ENCODE measurements at regions of chr19 and their contacts with region 1.

Region 1: DNA sequence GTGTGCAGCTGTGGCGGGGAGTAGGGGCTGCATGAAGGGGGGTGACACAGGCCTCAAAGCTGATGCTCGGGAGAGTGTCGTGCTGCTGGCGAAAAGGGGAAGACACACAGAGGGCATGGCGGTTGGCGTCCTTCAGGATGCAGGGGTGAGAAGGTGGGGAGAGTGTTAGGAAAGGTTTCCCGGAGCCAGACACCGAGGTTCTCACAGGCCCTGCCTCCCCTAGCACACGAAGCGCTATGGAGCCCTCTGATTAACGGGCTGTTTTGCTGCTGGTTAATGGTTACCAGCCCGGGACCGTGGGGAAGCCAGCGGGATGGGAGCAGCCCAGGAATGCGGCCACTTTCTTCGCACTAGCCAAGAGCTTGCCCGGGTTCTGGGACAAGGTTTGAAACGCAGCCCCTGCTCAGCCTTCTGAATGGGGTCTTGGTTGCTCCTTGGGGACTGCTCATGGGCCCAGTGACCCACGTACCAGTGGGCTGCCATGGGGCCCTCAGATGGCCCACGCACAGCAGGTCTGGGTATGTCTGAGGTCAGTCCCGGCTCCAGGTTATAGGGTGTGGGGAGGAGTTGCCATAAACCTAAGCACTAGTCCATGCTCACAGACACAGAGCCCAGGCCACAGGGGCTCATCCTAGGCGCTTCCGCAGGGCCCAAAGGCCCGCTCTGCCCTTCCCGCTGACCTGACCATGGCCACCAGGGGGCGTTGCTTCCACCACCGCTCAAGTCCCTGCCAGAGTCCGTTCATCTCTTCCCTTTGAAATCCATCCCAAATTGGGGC is 31.3 kb upstream of the ISYNA1 start:
- DNase-seq: peak; percentile 65
- ATAC-seq: peak; percentile 44 to 50

Region 2: GRCh38 chr19:18373892-18374629 is 95.2 kb before region 1 on chr19:
- intact Hi-C with region 1: no loop called
- DNase-seq: peak; percentile 94
- ATAC-seq: peak; percentile 97 to 98

Region 3: DNA sequence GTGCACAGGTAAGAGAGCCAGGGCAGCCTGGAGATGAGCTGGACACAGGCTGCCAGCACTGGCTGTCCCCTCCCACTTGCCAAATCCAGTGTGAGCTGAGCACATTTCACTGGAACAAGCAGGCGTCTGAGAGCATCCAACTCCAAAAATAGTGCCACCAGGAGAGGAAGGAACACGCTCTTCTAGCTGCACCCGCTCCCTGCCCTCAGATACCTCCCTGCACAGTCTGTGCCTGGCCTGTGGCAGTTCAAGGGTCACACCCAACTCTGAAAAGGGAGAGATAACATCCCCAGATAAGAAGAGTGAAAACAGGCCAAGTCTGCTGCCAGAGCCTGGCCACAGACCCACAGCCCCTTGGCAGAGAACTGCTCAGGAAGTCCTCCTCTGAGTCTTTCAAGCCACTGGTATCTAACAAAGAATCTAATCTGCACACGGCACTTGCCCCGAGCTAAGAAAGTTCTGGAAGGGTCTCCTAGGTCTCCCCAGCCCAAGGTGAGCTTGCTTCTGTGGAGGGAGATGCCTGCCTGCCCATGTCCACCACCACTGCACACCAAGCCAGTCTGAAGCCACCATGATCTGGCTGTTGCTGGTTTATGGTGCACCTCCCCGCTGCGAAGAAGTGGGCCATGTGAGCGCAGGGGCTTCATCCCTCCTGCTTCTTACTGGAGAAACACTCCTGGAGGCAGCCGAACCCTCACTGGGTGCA is 37.9 kb after region 1 on chr19:
- intact Hi-C with region 1: loop called (anchors 5 to 10 kb)
- DNase-seq: peak; percentile 53
- ATAC-seq: peak; percentile 54 to 64

Region 4: DNA sequence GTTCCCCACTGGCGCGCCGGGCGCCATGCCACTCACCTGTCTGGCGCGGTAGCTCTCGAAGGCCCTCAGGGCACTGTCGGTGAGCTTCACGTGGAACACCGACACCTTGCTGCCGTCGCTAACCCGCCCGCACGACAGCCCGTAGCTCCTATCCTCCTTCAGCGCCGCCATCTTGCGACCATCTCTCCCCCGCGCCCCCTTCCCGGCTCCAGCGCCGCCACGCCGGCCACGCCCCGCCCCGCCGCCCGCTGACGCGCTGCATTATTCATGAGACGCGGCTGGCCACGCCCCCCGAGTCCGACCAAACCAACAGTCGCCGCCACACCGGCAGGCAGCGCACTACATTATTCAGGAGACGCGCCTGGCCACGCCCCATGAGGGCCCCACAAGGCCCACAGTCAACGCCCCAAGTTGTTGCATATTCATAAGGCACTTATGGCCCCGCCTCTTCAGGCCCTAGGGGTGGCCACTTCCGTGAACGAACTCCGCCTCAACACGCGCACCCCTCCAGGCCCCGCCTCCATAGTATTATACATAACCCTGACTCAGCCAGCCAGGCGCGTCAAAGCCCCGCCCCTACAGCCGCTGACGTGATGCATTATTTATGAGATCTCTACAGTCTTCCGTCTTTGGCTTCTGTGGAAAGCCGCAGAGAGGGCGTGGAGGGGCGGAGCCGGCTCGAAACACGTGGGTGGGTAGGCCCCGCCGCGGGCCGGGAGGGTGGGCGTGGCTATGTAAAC is 52.8 kb after region 1 on chr19 and contains the start of gene ELL:
- intact Hi-C with region 1: loop called in 1 of 2 experiments (anchors 10 kb)
- DNase-seq: peak; percentile 100
- ATAC-seq: peak; percentile 92 to 93
- total RNA-seq, gene ELL: 10.8 to 18.7 TPM

Region 5: DNA sequence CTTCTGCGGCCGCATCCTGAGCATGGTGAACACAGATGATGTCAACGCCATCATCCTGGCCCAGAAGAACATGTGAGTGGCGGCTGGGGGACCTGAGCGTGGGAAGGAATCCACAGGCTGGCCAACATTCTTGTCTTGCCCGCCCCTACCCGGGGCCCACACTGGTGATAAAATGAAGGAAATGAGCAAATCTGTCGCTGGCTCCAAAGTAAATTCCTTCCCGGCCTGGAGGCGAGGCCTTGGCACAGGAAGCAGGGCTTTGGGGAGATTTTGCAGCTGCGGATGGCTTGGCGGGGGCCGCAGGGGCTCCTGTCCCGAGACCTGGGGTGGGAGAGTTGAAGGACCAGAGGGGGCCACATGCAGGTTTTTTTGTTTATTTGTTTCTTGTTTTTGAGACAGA is 92.8 kb after region 1 on chr19:
- intact Hi-C with region 1: loop called in 1 of 2 experiments (anchors 10 kb)
- DNase-seq: peak; percentile 83
- ATAC-seq: peak; percentile 28 to 33